Heart left ventricle (tissue), 16 donors: ENCODE measurements at regions of chr4 and their contacts with region 1.

Region 1: GRCh38 chr4:27000820-27001219 is 140.2 kb downstream of the STIM2 start:
- DNase-seq: no peak
- ATAC-seq: no peak
- H3K4me3 ChIP-seq: no peak overlapping the region
- H3K27ac ChIP-seq: no peak overlapping the region
- H3K4me1 ChIP-seq: peaks cover 0 to 8% (median 0%) of the 10 kb centered on the region in 12 donors
- H3K27me3 ChIP-seq: no peaks in the 10 kb centered on the region
- CTCF ChIP-seq: peak in 1 of 12 donors; percentile 9
- POLR2A ChIP-seq: no peak

Region 2: DNA sequence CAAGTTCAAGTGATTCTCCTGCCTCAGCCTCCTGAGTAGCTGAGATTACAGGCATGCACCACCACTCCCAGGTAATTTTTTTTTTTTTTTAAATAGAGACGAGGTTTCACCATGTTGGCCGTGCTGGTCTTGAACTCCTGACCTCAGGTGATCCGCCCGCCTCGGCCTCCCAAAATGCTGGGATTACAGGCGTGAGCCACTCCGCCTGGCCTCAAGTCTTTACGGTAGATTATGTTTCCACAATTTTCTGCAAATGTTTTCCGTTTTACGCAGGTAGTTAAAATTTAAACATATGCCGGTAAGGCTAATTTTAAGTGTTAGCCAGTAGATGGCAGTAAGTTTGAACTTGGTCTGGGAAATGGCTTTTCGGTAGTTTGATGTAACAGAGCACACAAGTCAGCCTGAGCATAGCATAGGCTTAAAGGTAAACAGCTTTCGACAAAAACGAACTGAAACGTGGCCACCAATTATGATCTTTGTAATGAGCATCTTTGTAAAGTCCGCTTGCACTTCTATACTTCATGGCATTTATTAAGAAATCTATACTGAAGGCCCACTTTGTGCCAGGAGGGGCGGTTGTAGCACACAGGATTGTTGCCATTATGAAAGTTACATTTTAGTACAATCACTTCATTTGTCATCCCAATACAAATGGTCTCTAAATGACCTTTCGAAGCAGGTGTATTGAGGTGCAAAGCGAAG is 541.6 kb before region 1 on chr4:
- intact Hi-C with region 1: loop called in 3 of 10 experiments (anchors 5 kb)
- DNase-seq: no peak
- ATAC-seq: peak in 2 of 4 donors; percentile 59 to 60
- H3K4me3 ChIP-seq: no peak overlapping the region
- H3K27ac ChIP-seq: peak overlapping the region in 1 of 12 donors; percentile 29
- H3K4me1 ChIP-seq: peaks cover 0 to 6% (median 0%) of the 10 kb centered on the region in 12 donors
- H3K27me3 ChIP-seq: no peaks in the 10 kb centered on the region
- CTCF ChIP-seq: peak; percentile 38 to 68 (median 57)
- POLR2A ChIP-seq: no peak

Region 3: GRCh38 chr4:26583865-26584652 is 416.8 kb before region 1 on chr4 and contains the start of gene TBC1D19:
- intact Hi-C with region 1: loop called in 3 of 10 experiments (anchors 10 kb)
- DNase-seq: peak; percentile 88 to 92 (median 91)
- ATAC-seq: peak; percentile 99 to 100 (median 100)
- H3K4me3 ChIP-seq: peak within 1 kb of the TSS; percentile 36 to 95 (median 78)
- H3K27ac ChIP-seq: peak within 1 kb of the TSS; percentile 18 to 80 (median 68)
- H3K4me1 ChIP-seq: peaks cover 0 to 22% (median 8%) of the 10 kb centered on the region in 12 donors
- H3K27me3 ChIP-seq: no peaks in the 10 kb centered on the region
- CTCF ChIP-seq: peak in 1 of 12 donors; percentile 7
- POLR2A ChIP-seq: peak in 1 of 2 donors; percentile 51
- total RNA-seq, gene TBC1D19: 6.4 to 10.9 (median 9.2) TPM

Region 4: DNA sequence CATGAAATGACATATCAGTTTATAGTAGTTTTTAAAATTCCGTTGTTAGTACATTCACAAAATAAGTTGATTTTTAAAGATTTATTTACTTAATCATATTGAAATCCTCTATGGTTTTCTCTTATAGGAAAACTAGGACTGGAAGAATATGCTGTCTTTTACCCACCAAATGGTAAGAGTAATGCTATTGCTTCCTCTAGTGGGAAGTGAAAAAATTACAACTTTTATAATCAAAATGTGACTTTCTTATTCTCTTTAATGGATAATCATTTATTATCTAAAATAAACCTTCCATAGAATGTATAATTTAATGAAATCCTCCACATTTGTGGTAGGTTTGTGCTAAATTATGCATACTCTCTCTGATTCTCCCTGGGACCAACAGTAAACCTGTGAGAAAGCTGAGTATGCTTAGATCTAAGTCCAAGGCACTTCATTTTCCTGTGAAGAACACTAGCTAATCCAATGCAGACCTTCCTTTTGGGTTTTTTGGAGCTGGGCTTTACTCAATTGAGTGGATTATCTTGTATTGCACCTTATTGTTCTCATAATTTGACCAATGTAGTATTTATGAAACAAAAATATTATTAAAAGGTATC is 280.8 kb before region 1 on chr4:
- intact Hi-C with region 1: loop called in 1 of 10 experiments (anchors 10 kb)
- DNase-seq: no peak
- ATAC-seq: no peak
- H3K4me3 ChIP-seq: no peak overlapping the region
- H3K27ac ChIP-seq: no peak overlapping the region
- H3K4me1 ChIP-seq: peaks cover 0 to 2% (median 0%) of the 10 kb centered on the region in 12 donors
- H3K27me3 ChIP-seq: no peaks in the 10 kb centered on the region
- CTCF ChIP-seq: peak; percentile 38 to 79 (median 56)
- POLR2A ChIP-seq: no peak

Region 5: GRCh38 chr4:26787461-26788340 is 213.1 kb before region 1 on chr4:
- intact Hi-C with region 1: loop called in 4 of 10 experiments (anchors 5 to 10 kb)
- DNase-seq: peak; percentile 42 to 67 (median 53)
- ATAC-seq: peak; percentile 52 to 83 (median 75)
- H3K4me3 ChIP-seq: peak overlapping the region in 1 of 12 donors; percentile 11
- H3K27ac ChIP-seq: peak overlapping the region in 10 of 12 donors; percentile 25 to 66 (median 52)
- H3K4me1 ChIP-seq: peaks cover 0 to 28% (median 18%) of the 10 kb centered on the region in 12 donors
- H3K27me3 ChIP-seq: no peaks in the 10 kb centered on the region
- CTCF ChIP-seq: peak; percentile 32 to 63 (median 45)
- POLR2A ChIP-seq: no peak

Region 6: DNA sequence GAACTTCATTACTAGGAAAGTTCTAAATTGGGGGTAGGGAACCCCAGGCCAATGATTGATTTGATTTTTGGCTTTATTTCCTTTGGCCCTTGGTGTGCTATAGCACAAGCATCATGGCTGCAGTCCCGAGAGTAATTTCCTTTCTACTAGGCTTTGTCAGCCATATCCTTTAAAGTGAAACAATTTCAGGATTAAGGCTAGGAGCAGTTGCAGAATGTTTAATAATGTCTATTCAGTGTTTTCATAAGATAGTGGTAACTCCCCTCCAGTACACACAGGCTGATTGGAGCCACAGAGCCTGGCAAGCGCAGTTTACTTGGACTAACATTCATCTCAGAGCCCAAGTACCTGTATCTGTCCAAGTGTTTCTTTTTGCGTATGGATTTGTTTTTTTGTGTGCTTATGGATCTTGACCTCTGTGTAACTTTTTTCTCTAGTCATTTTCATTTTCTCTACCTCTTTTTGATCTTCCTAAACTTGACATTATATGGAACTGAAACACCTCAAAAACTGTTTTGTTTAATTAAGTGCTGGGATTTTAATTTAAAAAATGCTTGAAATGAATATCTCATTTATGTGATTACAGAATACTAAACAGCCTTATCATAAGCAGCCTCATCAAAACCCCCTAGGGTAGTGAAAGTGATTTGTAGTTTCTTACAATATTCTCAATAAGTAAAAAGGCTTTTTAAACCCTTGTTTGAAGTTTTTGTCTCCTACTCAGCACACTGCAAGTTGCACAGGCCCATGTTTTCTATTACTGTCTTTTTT is 132.7 kb before region 1 on chr4:
- intact Hi-C with region 1: loop called in 5 of 10 experiments (anchors 5 kb)
- DNase-seq: no peak
- ATAC-seq: peak in 3 of 4 donors; percentile 29 to 65 (median 33)
- H3K4me3 ChIP-seq: peak overlapping the region in 1 of 12 donors; percentile 3
- H3K27ac ChIP-seq: peak overlapping the region in 7 of 12 donors; percentile 2 to 69 (median 36)
- H3K4me1 ChIP-seq: peaks cover 0 to 80% (median 23%) of the 10 kb centered on the region in 12 donors
- H3K27me3 ChIP-seq: no peaks in the 10 kb centered on the region
- CTCF ChIP-seq: no peak
- POLR2A ChIP-seq: no peak

Region 7: DNA sequence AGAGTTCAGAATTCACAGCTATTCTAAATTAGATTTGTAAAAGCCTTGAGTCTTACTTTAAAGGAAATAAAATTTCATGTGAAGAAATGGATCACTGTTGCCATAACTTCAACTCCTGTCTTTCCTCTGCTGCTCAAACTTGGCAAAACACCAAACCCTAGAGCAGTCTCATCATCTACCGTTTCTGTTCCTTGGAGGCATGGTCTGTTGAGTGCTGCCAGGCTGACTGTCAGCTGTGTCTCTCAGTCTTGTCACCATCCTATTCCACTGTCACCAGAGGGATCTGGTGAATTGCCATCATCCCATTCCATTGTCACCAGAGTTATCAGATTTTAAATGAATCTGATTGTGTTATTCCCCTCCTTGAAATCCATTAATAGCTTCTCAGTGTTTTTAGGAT is 84.6 kb before region 1 on chr4:
- intact Hi-C with region 1: no loop called
- DNase-seq: no peak
- ATAC-seq: no peak
- H3K4me3 ChIP-seq: no peak overlapping the region
- H3K27ac ChIP-seq: no peak overlapping the region
- H3K4me1 ChIP-seq: peaks cover 0 to 18% (median 2%) of the 10 kb centered on the region in 12 donors
- H3K27me3 ChIP-seq: no peaks in the 10 kb centered on the region
- CTCF ChIP-seq: no peak
- POLR2A ChIP-seq: no peak